ENCODE measurements at regions of chr6 and their contacts with region 1.

Region 1: DNA sequence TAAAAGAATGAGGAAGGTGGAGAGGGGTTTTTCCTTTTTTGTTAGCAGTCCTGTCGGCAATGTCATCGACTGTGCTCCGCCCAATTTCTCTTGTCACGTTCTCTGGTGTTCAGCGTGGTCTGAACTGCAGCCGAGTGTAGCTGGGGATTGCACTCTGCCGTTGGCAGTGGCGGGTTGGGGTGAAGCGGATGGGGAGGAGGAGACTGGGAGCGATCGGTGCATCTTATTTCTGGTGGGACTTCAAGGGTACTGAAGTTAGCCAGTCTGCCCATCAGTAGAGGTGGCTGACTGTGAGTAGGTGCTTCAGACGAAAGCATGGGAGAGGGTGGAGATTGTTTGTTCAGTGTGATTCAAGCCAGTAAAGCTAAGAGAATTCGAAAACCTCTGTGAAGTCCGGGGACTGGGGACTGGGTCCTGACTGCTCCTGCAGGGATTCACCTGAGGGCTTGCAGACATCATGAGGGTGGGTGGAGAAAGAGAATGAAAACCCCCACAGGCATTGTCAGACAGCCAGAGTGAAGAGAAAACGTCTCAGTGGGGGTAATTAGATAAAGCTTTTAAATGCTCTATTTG is 5.1 kb downstream of the RREB1 start:
- DNase-seq: peak; percentile 34
- ATAC-seq: no peak

Region 2: GRCh38 chr6:6736791-6737654 is 375.8 kb before region 1 on chr6:
- intact Hi-C with region 1: loop called in 1 of 2 experiments (anchors 10 kb)
- DNase-seq: peak; percentile 88
- ATAC-seq: peak; percentile 84 to 88

Region 3: DNA sequence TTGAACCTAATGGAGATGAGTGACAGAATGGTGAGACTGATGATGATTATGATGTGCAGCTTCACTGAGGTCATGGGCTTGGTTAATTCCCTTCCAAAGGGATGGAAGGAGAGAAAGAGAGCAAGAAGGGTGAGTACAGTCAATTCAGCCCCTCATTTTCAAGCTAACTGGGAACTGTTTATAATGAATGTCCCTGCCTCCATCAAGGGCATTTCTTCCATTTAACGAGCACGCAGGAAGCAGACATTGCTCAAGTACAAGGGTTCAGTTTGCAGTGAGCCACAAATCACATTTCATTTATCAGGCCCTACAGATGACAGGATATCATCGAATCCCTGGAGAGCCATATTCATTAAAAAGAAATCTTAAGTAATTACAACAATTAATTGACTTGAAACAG is 1147.8 kb after region 1 on chr6:
- intact Hi-C with region 1: no loop called
- DNase-seq: no peak
- ATAC-seq: no peak

Measured in left cardiac atrium (tissue), 4 donors.